IMR-90 (cell line): ENCODE measurements at regions of chr4 and their contacts with region 1.

Region 1: DNA sequence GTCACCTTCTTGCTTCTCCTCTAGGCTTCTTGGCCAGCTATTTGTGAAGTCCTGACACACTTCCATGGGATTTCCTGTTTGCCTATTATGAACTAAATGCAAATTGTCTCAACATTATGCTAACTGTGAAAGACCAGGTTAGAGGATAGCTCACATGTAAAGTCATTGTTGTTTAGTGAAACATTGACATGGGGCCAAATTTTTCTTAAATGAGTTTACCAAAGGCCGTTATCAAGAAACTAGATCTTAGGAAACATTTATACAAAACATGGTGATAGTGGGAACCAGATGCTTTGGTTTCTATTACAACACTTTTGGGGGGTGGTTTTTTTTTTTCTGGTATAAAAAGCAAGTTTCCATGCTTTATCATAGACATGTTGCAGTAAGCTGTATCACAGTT is 466.8 kb upstream of the FAM241A start:
- DNase-seq: peak; percentile 27
- ATAC-seq: no peak; the same call in 1 of the 2 replicates
- H3K4me3 ChIP-seq: no peak overlapping the region
- H3K27ac ChIP-seq: no peak overlapping the region
- H3K4me1 ChIP-seq: no peaks in the 10 kb centered on the region
- H3K27me3 ChIP-seq: no peaks in the 10 kb centered on the region
- CTCF ChIP-seq: no peak
- POLR2A ChIP-seq: no peak
- RAD21 ChIP-seq: no peak

Region 2: GRCh38 chr4:111579767-111580166 is 98.7 kb before region 1 on chr4:
- CTCF ChIA-PET with region 1: no interaction called
- POLR2A ChIA-PET with region 1: no interaction called
- dilution Hi-C with region 1: no loop called
- in situ Hi-C with region 1: no loop called
- intact Hi-C with region 1: no loop called
- DNase-seq: no peak
- ATAC-seq: no peak
- H3K4me3 ChIP-seq: no peak overlapping the region
- H3K27ac ChIP-seq: no peak overlapping the region
- H3K4me1 ChIP-seq: no peaks in the 10 kb centered on the region
- H3K27me3 ChIP-seq: no peaks in the 10 kb centered on the region
- CTCF ChIP-seq: no peak
- POLR2A ChIP-seq: no peak
- RAD21 ChIP-seq: no peak

Region 3: DNA sequence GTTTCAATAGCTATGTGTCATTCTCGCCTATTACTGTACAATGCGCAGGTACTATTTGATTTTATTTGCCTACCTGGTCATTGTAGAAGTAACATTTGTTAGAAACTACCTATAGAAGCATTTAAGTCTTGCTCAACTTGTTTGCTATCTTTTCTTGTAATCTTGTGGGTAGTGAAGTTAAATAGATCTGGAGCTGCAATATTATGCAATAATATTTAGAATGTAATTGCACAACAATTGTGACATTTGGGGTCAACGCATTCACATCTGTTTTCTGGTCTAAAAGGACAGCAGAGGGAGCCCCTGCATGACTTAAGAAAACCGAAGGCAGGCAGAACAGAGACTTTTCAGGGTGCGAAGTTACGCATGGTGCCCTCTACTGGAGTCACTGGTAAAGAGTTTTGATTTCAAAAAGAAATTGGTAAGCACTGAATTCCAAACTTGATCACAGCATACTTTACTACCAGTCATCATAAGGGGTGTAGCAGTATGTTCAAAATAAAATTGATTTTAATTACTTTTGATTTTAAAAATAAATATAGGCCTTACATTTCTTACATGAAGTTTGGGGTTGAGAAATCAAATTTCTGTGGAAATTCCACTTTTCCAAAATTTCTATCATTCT is 36.4 kb before region 1 on chr4:
- CTCF ChIA-PET with region 1: no interaction called
- POLR2A ChIA-PET with region 1: no interaction called
- dilution Hi-C with region 1: no loop called
- in situ Hi-C with region 1: no loop called
- intact Hi-C with region 1: no loop called
- DNase-seq: peak; percentile 86
- ATAC-seq: peak; percentile 91
- H3K4me3 ChIP-seq: no peak overlapping the region
- H3K27ac ChIP-seq: no peak overlapping the region
- H3K4me1 ChIP-seq: no peaks in the 10 kb centered on the region; the same call in 1 of the 2 replicates
- H3K27me3 ChIP-seq: no peaks in the 10 kb centered on the region
- CTCF ChIP-seq: peak; percentile 94
- POLR2A ChIP-seq: no peak
- RAD21 ChIP-seq: peak; percentile 63

Region 4: DNA sequence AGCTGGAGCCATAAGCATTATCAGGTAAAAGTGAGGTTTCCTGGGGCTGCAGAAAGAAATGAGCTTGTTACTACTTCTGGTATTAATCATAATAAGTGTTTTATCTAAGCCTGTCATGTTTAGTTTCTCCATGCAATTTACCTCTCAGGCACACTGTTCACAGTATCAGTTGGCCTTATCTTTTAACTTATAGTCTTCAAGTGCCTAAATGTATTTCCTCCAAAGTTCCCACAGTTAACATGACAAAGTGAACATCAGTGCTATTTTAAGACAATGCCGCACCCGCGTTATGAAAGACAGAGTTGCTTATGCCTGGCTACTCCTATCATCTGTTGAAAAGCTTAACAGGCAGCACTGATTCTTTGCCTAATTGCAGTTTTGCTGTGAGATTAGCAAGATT is 58.0 kb after region 1 on chr4:
- CTCF ChIA-PET with region 1: no interaction called
- POLR2A ChIA-PET with region 1: interaction called, 10 read pairs
- dilution Hi-C with region 1: no loop called
- in situ Hi-C with region 1: no loop called
- intact Hi-C with region 1: no loop called
- DNase-seq: no peak
- ATAC-seq: no peak
- H3K4me3 ChIP-seq: no peak overlapping the region
- H3K27ac ChIP-seq: no peak overlapping the region
- H3K4me1 ChIP-seq: no peaks in the 10 kb centered on the region
- H3K27me3 ChIP-seq: no peaks in the 10 kb centered on the region
- CTCF ChIP-seq: no peak
- POLR2A ChIP-seq: no peak
- RAD21 ChIP-seq: no peak

Region 5: DNA sequence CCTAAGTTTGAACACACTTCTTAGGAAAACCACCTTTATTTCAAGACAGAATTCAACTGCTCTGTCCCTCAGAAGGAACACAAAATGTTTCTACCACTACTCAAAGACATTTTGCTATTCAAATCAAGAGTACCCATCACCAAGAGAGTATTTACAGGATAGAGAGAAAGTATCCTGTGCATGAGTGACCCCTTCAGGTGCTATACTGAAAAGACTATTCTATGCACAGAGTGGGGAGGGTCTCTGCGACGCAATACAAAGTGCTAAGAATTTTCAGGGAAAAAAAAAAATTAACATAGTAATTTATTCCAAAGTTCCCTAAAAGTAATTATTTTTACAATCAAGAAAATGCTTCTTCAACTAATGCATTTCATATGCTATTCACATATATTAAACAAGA is 120.4 kb after region 1 on chr4:
- CTCF ChIA-PET with region 1: no interaction called
- POLR2A ChIA-PET with region 1: no interaction called
- dilution Hi-C with region 1: no loop called
- in situ Hi-C with region 1: no loop called
- intact Hi-C with region 1: no loop called
- DNase-seq: no peak
- ATAC-seq: no peak
- H3K4me3 ChIP-seq: no peak overlapping the region
- H3K27ac ChIP-seq: no peak overlapping the region
- H3K4me1 ChIP-seq: no peaks in the 10 kb centered on the region
- H3K27me3 ChIP-seq: no peaks in the 10 kb centered on the region
- CTCF ChIP-seq: no peak
- POLR2A ChIP-seq: no peak
- RAD21 ChIP-seq: no peak